Activated CD8-positive, alpha-beta T cell treated with anti-CD3 and anti-CD28 coated beads for 36 hours (primary cell): ENCODE measurements at regions of chr17 and their contacts with region 1.

Region 1: GRCh38 chr17:1390433-1391367 is 9.3 kb downstream of the YWHAE start:
- DNase-seq: no peak
- ATAC-seq: no peak
- H3K4me3 Mint-ChIP-seq: no peak overlapping the region
- H3K27ac Mint-ChIP-seq: peak overlapping the region; percentile 51
- H3K4me1 Mint-ChIP-seq: peaks cover 74% of the 10 kb centered on the region
- H3K27me3 Mint-ChIP-seq: no peaks in the 10 kb centered on the region
- CTCF ChIP-seq: no peak

Region 2: DNA sequence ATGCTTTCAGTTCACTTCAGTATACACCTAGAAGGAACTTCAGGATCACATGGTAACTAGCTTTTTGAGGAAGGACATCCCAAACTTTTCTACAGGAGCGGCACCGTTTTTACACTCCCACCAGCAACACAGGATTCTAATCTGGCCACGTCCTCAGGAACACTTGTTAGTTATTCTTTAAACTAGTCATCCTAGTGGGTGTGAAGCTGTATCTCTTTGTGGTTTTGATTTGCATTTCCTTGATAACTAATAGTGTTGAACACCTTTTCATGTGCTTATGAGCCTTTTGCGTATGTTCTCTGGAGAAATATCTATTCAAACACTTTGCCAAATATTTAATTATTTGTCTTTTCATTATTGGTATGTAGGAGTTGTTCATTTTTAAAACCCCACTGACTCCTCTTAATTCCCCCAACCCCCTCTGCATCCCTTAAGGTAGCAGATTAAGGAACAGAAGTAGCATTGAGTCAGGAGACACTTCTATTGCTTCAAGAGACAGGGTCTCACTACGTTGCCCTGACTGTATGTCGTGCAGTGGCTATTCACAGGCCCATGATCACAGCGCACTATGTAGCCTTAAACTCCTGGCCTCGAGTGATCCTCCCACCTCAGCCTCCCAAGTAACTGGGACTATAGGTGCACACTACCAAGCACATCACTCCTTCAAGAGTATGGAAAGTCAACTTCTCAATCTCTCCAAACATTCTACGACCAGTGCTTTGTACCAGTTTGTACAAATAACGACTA is 16.1 kb before region 1 on chr17:
- CTCF ChIA-PET with region 1: interaction called, 11 read pairs
- POLR2A ChIA-PET with region 1: interaction called, 22 read pairs
- intact Hi-C with region 1: no loop called
- DNase-seq: no peak
- ATAC-seq: peak; percentile 60
- H3K4me3 Mint-ChIP-seq: peak overlapping the region; percentile 7
- H3K27ac Mint-ChIP-seq: peak overlapping the region; percentile 83
- H3K4me1 Mint-ChIP-seq: peaks cover 73% of the 10 kb centered on the region
- H3K27me3 Mint-ChIP-seq: no peaks in the 10 kb centered on the region
- CTCF ChIP-seq: no peak

Region 3: GRCh38 chr17:1379930-1380313 is 10.8 kb before region 1 on chr17:
- CTCF ChIA-PET with region 1: interaction called, 11 read pairs
- POLR2A ChIA-PET with region 1: interaction called, 22 read pairs
- intact Hi-C with region 1: no loop called
- DNase-seq: peak; percentile 60
- ATAC-seq: peak; percentile 74
- H3K4me3 Mint-ChIP-seq: peak overlapping the region; percentile 1
- H3K27ac Mint-ChIP-seq: peak overlapping the region; percentile 67
- H3K4me1 Mint-ChIP-seq: peaks cover 69% of the 10 kb centered on the region
- H3K27me3 Mint-ChIP-seq: no peaks in the 10 kb centered on the region
- CTCF ChIP-seq: no peak